Dorsolateral prefrontal cortex (tissue), 120 donors: ENCODE measurements at regions of chr20 and their contacts with region 1.

Region 1: GRCh38 chr20:11544029-11544678 is 373.5 kb upstream of the BTBD3 start:
- DNase-seq: peak in 1 of 10 donors; percentile 34
- H3K4me3 ChIP-seq: peak overlapping the region in 38 of 59 donors; percentile 3 to 53 (median 29)
- H3K27ac ChIP-seq: no peak overlapping the region
- H3K27me3 ChIP-seq: no peaks in the 10 kb centered on the region
- CTCF ChIP-seq: peak; percentile 50 to 89 (median 73)

Region 2: DNA sequence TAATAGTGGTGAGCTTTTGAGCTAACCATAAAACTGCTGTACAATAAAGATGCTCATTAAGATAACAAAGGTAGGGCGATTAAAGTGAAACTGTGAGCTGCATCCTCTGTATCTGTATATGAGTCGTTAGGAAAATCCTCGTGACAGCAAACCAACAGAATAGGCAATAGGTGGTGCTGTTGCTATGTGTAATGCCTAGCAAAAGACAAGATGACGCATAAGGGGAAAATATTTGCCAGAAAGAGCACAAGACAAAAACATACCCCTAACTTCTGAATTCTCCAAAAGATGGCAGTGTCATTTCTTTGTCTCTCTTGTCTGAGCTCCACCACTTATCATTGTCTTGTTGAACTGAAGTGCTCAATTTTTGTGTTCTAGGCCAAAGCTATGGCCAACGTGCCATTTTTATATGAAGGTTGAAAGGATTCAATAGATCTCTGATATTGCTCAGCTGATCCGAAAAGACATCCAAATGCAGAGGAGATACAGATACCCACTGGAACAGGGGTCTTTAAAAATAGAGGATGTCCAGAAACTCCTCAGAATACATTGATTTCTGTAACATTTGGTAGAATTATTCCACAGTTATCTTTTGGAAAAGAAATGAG is 1565.7 kb before region 1 on chr20:
- intact Hi-C with region 1: loop called in 1 of 2 experiments (anchors 5 kb)
- DNase-seq: peak in 3 of 10 donors; percentile 44 to 66 (median 55)
- H3K4me3 ChIP-seq: peak overlapping the region in 16 of 59 donors; percentile 4 to 39 (median 15)
- H3K27ac ChIP-seq: peak overlapping the region in 12 of 59 donors; percentile 0 to 58 (median 25)
- H3K27me3 ChIP-seq: no peaks in the 10 kb centered on the region
- CTCF ChIP-seq: peak; percentile 59 to 98 (median 87)

Region 3: GRCh38 chr20:10434467-10434831 is 1109.7 kb before region 1 on chr20:
- intact Hi-C with region 1: loop called in 1 of 2 experiments (anchors 10 kb)
- DNase-seq: peak; percentile 83 to 95 (median 92)
- H3K4me3 ChIP-seq: peak overlapping the region; percentile 68 to 100 (median 94)
- H3K27ac ChIP-seq: peak overlapping the region; percentile 84 to 99 (median 98)
- H3K27me3 ChIP-seq: no peaks in the 10 kb centered on the region
- CTCF ChIP-seq: peak in 2 of 56 donors; percentile 6 to 12

Region 4: DNA sequence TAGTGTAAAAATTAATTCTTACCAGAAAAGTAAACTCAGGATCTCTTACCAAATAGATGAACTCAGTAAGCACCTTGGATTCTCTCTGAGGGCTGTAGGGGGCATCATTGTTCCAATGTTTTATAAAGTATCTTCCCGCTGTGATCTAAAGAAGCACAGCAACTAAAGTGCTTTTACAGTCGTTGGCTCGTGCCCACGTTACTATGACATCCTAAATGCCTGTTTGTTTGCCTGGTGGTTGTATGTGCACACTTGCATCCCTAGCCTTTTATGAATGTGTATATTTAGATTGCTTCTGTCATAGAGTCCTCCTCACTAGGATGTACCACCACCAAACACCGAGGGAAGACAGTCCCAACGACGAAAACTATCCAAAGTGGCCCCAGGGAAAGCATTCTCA is 1074.6 kb before region 1 on chr20:
- intact Hi-C with region 1: loop called in 1 of 2 experiments (anchors 10 kb)
- DNase-seq: peak in 3 of 10 donors; percentile 28 to 58 (median 36)
- H3K4me3 ChIP-seq: peak overlapping the region in 8 of 59 donors; percentile 1 to 31 (median 22)
- H3K27ac ChIP-seq: peak overlapping the region in 1 of 59 donors; percentile 36
- H3K27me3 ChIP-seq: no peaks in the 10 kb centered on the region
- CTCF ChIP-seq: peak; percentile 38 to 86 (median 72)

Region 5: DNA sequence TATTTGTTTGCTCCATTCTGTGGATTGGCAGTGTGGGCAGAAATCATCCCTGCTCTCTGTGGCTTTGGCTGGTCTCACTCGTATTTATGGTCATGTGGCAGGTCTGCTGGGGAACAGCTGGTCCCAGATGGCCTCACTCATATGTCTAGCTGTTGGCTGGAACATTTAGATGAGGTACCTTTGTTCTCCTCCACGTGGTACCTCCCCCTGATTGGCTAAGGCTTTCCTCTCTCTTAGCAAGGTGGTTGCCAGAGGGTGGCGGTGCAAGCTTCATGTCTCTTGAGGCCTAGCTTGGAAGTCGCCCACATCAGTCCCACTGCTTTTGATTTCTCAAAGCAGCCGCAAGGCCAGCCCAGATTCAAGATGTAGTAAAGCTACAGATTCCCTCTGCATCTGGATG is 25.0 kb after region 1 on chr20:
- intact Hi-C with region 1: no loop called
- DNase-seq: no peak
- H3K4me3 ChIP-seq: no peak overlapping the region
- H3K27ac ChIP-seq: no peak overlapping the region
- H3K27me3 ChIP-seq: no peaks in the 10 kb centered on the region
- CTCF ChIP-seq: no peak